Heart right ventricle (tissue), 16 donors: ENCODE measurements at regions of chr1 and their contacts with region 1.

Region 1: DNA sequence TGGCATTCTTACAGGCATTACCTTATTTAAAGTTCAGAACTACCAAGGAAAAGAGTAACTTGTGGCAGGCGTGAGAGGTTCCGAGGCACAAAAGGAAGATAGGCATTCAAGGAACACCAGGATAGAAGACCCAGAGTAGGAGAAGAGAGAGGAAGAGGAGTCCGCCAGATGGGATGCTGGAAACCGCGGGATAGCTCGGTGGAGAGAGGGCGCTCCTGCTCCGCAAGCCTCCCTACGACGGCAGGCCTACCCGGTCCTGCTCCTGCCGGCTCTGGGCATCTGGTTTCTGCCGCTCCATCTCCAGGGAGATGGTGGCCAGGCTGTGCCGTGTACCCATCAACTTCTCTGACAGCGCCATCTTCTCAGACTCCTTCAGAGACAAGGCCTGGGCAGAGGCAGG is 5.4 kb upstream of the NBPF1 start:
- DNase-seq: peak in 1 of 2 donors; percentile 2
- ATAC-seq: peak in 1 of 8 donors; percentile 1
- H3K4me3 ChIP-seq: no peak overlapping the region
- H3K27ac ChIP-seq: no peak overlapping the region
- H3K4me1 ChIP-seq: peaks cover 0 to 10% (median 4%) of the 10 kb centered on the region in 9 donors
- H3K27me3 ChIP-seq: peaks cover 0 to 14% (median 0%) of the 10 kb centered on the region in 7 donors
- CTCF ChIP-seq: no peak

Region 2: DNA sequence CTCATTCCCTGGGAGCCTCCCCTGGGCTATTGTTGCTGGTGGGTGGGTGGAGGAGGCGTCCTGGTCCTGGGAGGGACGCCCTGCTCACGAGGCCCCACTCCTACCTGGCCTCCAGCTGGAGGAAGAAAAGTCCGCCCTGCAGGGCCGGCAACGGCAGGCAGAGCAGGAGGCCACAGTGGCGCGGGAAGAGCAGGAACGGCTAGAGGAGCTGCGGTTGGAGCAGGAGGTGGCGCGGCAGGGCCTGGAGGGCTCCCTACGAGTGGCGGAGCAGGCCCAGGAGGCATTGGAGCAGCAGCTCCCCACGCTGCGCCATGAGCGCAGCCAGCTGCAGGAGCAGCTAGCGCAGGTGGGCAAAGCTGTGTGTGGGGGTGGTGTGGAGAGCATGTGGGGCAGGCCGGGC is 327.9 kb after region 1 on chr1:
- intact Hi-C with region 1: loop called in 8 of 10 experiments (anchors 1 to 5 kb)
- DNase-seq: no peak
- ATAC-seq: peak in 2 of 8 donors; percentile 9 to 19
- H3K4me3 ChIP-seq: no peak overlapping the region
- H3K27ac ChIP-seq: no peak overlapping the region
- H3K4me1 ChIP-seq: peaks cover 0 to 2% (median 0%) of the 10 kb centered on the region in 9 donors
- H3K27me3 ChIP-seq: no peaks in the 10 kb centered on the region
- CTCF ChIP-seq: no peak